GM23248 (cell line): ENCODE measurements at regions of chr1 and their contacts with region 1.

Region 1: DNA sequence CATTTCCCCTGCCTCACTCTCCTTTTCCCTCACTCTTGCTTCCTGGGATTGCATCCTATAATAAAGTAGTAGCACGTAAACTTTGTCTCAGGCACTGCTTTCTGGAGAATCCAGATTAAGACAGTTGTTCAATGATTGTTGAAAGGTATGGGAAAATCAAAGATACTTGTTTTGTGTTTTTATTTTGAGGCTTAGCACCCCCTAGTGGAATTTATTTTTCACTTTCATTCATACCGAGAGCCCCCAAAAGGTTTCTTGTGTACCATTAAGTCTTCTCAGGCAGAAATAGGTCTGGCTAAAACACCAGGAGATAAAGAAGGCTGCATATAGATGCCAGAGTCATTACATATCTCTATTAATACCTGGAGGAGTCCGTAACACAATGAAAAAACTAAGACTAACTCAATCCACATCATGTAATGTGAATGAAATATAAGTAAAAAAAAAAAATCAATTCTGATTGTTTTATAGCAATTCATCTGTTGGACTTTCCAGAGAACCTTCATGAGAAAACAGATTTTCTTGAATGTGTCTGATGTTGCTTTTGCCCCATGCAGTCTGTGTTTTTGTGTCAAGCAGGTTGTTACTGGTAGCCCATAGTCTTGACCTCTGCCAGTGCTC is 103.5 kb downstream of the RPE65 start:
- DNase-seq: peak; percentile 49
- H3K4me3 ChIP-seq: no peak overlapping the region
- H3K27ac ChIP-seq: no peak overlapping the region
- H3K4me1 ChIP-seq: no peaks in the 10 kb centered on the region
- H3K27me3 ChIP-seq: no peaks in the 10 kb centered on the region; the same call in 1 of the 2 replicates

Region 2: GRCh38 chr1:67853704-67854103 is 492.6 kb before region 1 on chr1:
- in situ Hi-C with region 1: loop called (anchors 10 kb)
- DNase-seq: peak; percentile 86
- H3K4me3 ChIP-seq: no peak overlapping the region
- H3K27ac ChIP-seq: no peak overlapping the region
- H3K4me1 ChIP-seq: peaks cover 10% of the 10 kb centered on the region
- H3K27me3 ChIP-seq: no peaks in the 10 kb centered on the region

Region 3: GRCh38 chr1:68116643-68117235 is 229.6 kb before region 1 on chr1:
- in situ Hi-C with region 1: loop called (anchors 5 kb)
- DNase-seq: peak; percentile 59
- H3K4me3 ChIP-seq: peak overlapping the region; percentile 34; the same call in 1 of the 2 replicates
- H3K27ac ChIP-seq: no peak overlapping the region
- H3K4me1 ChIP-seq: peaks cover 32% of the 10 kb centered on the region
- H3K27me3 ChIP-seq: no peaks in the 10 kb centered on the region

Region 4: DNA sequence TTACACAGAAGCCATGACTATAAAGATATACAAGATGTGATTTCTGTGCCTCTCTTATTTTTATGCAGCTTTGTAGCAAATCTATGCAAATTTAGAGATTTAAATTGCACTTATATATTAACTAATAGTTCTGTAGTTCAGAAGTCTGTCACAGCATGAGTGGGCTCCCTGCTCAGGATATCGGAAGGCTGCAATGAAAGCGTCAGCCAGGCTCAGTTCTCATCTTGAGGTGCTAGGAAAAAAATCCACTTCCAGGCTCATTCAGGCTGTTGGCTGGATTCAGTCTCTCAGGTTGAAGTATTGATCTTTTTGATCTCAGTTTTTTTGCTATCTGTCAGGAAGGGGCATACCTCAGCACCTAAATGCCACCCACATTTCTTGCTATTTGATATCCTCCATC is 638.0 kb after region 1 on chr1:
- in situ Hi-C with region 1: no loop called
- DNase-seq: no peak
- H3K4me3 ChIP-seq: no peak overlapping the region
- H3K27ac ChIP-seq: no peak overlapping the region
- H3K4me1 ChIP-seq: no peaks in the 10 kb centered on the region
- H3K27me3 ChIP-seq: no peaks in the 10 kb centered on the region